Activated naive CD4-positive, alpha-beta T cell treated with anti-CD3 and anti-CD28 coated beads, Interleukin-2, amount 10 ng/mL, durations not matched to agents 7 days and 5 days (primary cell): ENCODE measurements at regions of chr1 and their contacts with region 1.

Region 1: GRCh38 chr1:156728597-156729462 is at the start of gene ISG20L2:
- DNase-seq: peak; percentile 98
- H3K4me3 Mint-ChIP-seq: no peak within 1 kb of the TSS
- H3K27ac Mint-ChIP-seq: no peak within 1 kb of the TSS
- H3K4me1 Mint-ChIP-seq: peaks cover 28% of the 10 kb centered on the region
- H3K27me3 Mint-ChIP-seq: no peaks in the 10 kb centered on the region

Region 2: DNA sequence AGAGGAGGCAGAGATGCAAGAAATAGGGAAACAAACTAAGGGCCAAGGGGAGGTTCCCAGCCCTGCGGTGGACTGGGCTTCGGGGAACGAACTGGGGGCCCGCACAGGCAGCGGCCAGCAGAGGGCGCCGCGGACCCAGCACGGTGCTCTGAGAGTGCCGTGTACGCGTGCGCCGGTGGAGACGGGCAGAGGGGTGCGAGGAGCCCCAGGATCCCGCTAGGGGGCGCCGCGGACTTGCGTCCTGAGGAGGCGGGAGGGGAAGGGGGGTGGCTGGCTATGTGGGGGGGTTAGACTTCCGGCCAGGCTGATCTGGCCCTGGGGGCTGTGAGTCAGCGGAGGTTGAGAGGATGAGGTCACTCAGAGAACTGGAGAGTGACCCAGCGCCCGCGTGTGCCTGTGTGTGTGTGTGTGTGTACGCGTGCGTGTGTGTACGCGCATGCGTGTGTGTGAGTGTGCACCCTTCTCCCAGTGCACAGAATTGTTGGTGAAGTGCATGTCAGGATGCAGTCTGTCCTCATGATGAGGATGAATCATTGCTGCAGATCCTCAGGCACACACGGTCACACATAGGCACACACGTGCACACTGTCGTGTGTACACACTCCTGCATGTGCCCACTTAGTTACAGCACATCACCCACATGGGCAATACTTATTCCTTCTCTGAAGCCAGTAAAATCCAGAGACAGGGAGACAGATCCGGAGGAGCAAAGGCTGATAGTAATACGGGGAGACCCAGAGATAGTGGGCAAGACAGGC is 68.7 kb before region 1 on chr1:
- CTCF ChIA-PET with region 1: interaction called, 35 read pairs
- DNase-seq: peak; percentile 94
- H3K4me3 Mint-ChIP-seq: peak overlapping the region; percentile 69
- H3K27ac Mint-ChIP-seq: peak overlapping the region; percentile 80
- H3K4me1 Mint-ChIP-seq: peaks cover 67% of the 10 kb centered on the region
- H3K27me3 Mint-ChIP-seq: peaks cover 84% of the 10 kb centered on the region

Region 3: DNA sequence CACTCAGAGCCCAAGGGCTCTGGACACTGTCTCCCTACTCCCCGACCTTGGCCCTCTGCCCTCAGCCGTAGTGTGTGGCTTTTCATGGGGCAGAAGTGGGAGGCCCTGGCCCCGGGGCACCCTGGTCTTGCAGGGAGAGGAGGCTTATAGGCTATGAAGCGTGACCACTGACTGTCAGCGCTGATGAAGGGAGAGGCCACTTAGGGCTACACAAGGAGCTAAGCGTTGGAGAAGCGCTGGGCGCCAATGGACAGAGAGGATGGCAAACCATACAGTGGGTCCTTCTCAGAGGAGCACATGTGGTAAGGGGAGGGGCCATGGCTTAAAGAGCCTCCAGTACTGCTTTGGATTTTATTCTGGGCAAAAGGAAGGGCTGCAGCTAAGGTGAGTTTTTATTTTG is 31.3 kb before region 1 on chr1:
- CTCF ChIA-PET with region 1: interaction called, 224 read pairs
- DNase-seq: no peak
- H3K4me3 Mint-ChIP-seq: no peak overlapping the region
- H3K27ac Mint-ChIP-seq: no peak overlapping the region
- H3K4me1 Mint-ChIP-seq: peaks cover 13% of the 10 kb centered on the region
- H3K27me3 Mint-ChIP-seq: peaks cover 82% of the 10 kb centered on the region

Region 4: DNA sequence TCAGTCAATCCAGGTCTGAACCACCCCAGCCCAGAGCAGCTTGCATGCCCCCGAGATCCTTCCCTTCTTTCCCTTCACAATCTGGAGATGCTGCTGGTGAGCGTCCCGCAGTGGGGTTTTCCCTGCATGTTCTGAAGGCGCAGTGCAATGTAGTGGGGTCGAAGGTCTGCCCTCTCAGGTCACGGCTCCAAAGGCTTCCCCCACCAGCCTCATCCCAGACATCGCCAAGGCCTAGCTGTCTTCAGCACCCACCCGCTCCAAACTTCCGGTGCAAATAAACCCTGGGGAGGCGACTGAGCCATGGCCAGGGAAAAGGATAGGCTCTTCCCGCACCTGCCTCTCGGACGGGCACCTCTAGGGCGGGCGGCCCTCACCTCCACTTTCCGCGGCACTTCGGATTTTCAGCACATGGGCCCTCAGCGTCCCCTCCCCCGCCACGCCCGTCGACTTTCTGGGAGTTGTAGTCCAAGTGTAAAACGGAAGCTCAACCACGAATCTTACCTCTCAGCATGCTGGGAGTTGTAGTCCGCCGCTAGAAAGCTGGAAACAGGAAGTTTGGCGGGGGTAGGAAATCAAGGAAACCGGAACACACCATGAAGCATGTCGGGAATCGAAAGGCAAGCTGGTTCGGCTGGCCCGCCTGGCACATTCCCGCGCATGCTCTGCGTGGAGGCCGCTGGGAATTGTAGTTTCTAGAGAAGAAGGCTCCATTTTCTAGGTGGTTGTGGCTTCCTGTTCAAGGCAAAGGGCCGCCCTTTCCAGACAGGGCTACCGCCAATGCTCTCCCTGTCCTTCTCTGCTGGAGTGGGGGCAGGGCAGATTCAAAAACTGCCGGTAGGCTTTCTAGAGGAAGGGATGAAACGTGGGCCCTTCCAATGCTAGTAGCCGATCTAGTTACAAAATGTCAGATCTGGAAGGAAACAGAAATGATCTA is 12.1 kb after region 1 on chr1 and contains the start of gene MRPL24:
- CTCF ChIA-PET with region 1: interaction called, 20 read pairs
- DNase-seq: peak; percentile 98
- H3K4me3 Mint-ChIP-seq: peak within 1 kb of the TSS; percentile 97
- H3K27ac Mint-ChIP-seq: peak within 1 kb of the TSS; percentile 97
- H3K4me1 Mint-ChIP-seq: peaks cover 61% of the 10 kb centered on the region
- H3K27me3 Mint-ChIP-seq: no peaks in the 10 kb centered on the region

Region 5: DNA sequence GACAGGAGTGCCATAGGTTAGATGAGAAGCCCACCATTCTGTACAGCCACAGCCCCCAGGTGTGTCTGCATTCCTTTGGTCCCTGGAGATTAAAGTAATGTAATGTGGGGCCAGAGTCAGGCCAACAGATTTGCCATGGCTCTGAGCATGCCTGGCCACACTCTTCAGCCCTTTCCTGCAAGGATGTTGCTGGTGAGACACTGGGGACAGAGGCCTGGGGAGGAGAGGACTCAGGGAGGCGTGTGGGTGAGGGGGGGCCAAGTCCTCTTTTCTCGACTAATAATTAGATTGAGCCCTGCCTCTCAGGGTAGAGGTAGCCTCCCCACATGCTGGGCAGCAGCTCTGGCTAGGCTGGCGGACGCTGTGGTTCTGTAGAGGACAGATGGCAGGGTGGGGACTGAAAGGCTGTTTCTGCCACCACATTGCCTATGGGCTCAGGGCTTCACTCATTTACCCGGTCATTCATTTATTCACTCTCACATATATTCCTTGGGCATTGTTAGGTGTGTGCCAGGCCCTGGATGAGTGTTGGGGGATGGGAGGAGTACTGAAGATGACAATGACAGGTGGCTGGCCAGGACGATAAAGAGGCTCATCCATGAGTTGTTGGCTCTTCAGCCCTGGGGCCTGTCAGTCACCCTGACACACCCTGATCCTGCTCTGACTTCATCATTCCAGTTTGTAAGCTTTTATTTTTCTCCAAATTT is 31.4 kb after region 1 on chr1:
- CTCF ChIA-PET with region 1: interaction called, 95 read pairs
- DNase-seq: no peak
- H3K4me3 Mint-ChIP-seq: no peak overlapping the region
- H3K27ac Mint-ChIP-seq: no peak overlapping the region
- H3K4me1 Mint-ChIP-seq: peaks cover 2% of the 10 kb centered on the region
- H3K27me3 Mint-ChIP-seq: peaks cover 4% of the 10 kb centered on the region

Region 6: GRCh38 chr1:156797212-156797871 is 68.5 kb after region 1 on chr1:
- CTCF ChIA-PET with region 1: interaction called, 75 read pairs
- DNase-seq: peak; percentile 79
- H3K4me3 Mint-ChIP-seq: no peak overlapping the region
- H3K27ac Mint-ChIP-seq: no peak overlapping the region
- H3K4me1 Mint-ChIP-seq: peaks cover 9% of the 10 kb centered on the region
- H3K27me3 Mint-ChIP-seq: no peaks in the 10 kb centered on the region

Region 7: DNA sequence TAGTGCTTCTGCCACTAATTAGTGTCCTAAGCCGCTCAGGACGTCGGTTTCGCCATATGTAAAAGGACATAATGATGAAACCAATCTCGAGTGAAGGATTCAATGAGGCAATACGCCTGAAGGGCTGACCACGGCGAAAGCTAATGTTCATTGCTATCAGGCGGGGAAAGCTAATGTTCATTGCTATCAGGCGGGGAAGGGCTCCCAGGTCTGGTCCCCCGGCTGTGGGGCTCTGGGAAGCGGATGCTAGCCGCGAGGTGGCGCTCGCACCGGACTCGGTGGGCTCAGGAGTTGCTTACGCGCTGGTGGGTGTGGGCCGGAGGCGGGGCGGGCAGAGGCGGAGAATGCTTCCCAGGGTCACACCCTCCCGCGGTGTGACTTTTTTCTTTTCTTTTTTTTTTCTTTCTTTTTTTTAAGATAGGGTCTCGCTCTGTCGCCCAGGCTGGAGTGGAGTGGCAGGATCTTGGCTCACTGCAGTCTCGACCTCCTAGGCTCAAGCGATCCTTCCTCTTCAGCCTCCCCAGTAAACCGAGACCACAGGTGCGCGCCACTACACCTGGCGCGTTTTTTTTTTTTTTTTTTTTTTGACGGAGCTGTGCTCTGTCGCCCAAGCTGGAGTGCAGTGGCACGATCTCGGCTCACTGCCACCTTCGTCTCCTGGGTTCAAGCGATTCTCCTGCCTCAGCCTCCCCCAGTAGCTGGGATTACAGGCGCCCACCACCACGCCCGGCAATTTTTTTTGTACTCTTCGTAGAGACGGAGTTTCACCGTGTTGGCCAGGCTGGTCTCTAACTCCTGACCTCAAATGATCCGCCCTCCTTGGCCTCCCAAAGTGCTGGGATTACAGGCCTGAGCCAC is 163.6 kb after region 1 on chr1:
- CTCF ChIA-PET with region 1: interaction called, 84 read pairs
- DNase-seq: peak; percentile 92
- H3K4me3 Mint-ChIP-seq: peak overlapping the region; percentile 59
- H3K27ac Mint-ChIP-seq: peak overlapping the region; percentile 66
- H3K4me1 Mint-ChIP-seq: peaks cover 27% of the 10 kb centered on the region
- H3K27me3 Mint-ChIP-seq: peaks cover 94% of the 10 kb centered on the region